ENCODE measurements at regions of chr6 and their contacts with region 1.

Region 1: DNA sequence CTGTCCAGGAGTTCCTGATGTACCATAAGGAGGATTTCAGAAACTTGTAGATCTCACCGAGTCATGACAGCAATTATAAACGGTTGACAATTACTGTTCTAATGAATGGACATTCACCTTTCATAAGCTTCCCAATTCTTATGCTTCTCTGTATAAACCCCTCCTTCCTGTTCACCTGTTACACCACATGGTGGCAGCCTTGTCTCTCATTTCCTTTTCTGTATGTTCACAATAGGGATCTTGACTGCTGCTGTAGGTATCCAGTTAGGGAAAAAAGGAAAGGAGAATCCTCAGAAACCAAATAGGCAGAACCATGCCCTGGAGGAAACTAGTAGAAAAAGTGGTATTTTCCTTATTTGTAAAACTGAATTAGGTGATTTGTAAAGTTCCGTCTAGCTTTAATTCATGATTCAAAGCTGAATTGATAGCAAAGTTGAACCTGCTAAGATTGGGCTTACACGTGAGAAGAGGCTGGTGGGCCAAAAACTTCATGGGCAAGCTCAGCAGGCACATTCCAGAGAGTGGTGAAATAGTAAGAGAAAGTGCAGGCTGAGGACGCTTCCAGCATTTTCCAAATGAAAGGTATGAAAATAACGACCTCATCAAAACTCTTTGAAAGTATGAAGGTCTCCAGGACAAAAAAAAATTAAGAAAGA is 29.0 kb upstream of the TBPL1 start:
- DNase-seq: peak; percentile 72 to 79 (median 74)
- H3K4me3 ChIP-seq: no peak overlapping the region
- H3K27ac ChIP-seq: no peak overlapping the region
- H3K4me1 ChIP-seq: no peaks in the 10 kb centered on the region
- H3K27me3 ChIP-seq: peaks cover 3 to 40% (median 8%) of the 10 kb centered on the region in 5 experiments

Region 2: GRCh38 chr6:133568970-133569889 is 354.8 kb before region 1 on chr6:
- CTCF ChIA-PET with region 1: interaction called, 29 read pairs
- POLR2A ChIA-PET with region 1: no interaction called
- DNase-seq: peak; percentile 19 to 62 (median 51)
- H3K4me3 ChIP-seq: peak overlapping the region in 2 of 7 experiments; percentile 16 to 52
- H3K27ac ChIP-seq: no peak overlapping the region
- H3K4me1 ChIP-seq: peaks cover 0 to 5% (median 1%) of the 10 kb centered on the region in 4 experiments
- H3K27me3 ChIP-seq: peaks cover 12 to 52% (median 17%) of the 10 kb centered on the region in 5 experiments

Region 3: GRCh38 chr6:133906050-133906449 is 18.0 kb before region 1 on chr6:
- CTCF ChIA-PET with region 1: interaction called, 43 read pairs
- POLR2A ChIA-PET with region 1: no interaction called
- DNase-seq: peak in 2 of 3 donors; percentile 34 to 36
- H3K4me3 ChIP-seq: no peak overlapping the region
- H3K27ac ChIP-seq: no peak overlapping the region
- H3K4me1 ChIP-seq: no peaks in the 10 kb centered on the region
- H3K27me3 ChIP-seq: peaks cover 13 to 71% (median 27%) of the 10 kb centered on the region in 5 experiments

Region 4: DNA sequence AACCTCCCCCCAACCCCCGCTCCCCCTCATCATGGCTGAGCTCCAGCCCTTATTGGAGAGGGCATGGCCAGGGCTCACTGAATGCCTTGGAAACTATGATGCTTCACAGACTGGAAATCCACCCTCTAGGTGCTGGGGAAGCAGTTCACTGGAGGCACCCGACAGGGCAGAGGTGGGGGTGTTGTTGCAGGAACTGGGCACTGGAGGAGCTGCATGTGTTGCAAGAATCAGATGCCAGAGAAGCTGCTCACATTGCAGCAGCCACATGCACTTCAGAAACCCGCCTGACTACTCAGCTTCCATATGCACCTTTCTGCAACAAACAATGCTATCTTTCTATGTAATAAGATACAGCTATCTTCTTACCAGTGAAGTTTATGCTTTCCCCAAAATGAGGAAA is 21.1 kb after region 1 on chr6:
- CTCF ChIA-PET with region 1: interaction called, 18 read pairs
- POLR2A ChIA-PET with region 1: no interaction called
- DNase-seq: no peak
- H3K4me3 ChIP-seq: no peak overlapping the region
- H3K27ac ChIP-seq: no peak overlapping the region
- H3K4me1 ChIP-seq: no peaks in the 10 kb centered on the region
- H3K27me3 ChIP-seq: peaks cover 0 to 2% (median 0%) of the 10 kb centered on the region in 5 experiments

Region 5: DNA sequence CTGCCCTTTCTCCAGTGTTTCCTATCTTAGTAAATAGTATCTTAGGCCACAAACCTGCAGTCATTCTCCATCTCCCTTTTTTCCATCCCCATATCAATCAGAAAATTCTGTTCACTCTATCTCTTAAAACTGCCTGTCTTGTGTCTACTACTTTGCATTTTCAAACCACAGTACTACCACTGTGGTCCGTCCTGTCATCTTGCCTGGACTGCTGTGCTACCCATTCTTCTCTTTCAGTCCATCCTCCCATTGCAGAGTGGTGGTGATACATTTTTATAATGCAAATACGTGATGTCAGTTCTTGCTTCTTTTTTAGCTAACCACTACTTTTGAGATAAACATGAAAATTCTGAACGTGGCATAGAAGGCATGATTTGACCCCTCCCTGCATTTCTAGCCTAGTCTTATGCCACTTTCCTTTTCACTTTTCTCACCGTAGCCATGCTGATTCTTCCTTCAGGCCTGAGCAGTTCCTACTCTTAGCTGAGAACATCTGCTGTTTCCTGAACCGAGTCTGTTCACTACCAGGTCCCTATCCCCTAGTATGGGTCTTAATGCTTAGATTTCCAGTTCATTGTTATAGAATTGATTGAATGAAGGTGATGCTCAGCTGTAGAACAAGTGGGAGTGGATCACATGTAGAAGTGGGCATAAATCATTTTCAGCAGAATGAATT is 42.7 kb after region 1 on chr6:
- CTCF ChIA-PET with region 1: interaction called, 12 read pairs
- POLR2A ChIA-PET with region 1: no interaction called
- DNase-seq: no peak
- H3K4me3 ChIP-seq: no peak overlapping the region
- H3K27ac ChIP-seq: no peak overlapping the region
- H3K4me1 ChIP-seq: no peaks in the 10 kb centered on the region
- H3K27me3 ChIP-seq: no peaks in the 10 kb centered on the region

Region 6: DNA sequence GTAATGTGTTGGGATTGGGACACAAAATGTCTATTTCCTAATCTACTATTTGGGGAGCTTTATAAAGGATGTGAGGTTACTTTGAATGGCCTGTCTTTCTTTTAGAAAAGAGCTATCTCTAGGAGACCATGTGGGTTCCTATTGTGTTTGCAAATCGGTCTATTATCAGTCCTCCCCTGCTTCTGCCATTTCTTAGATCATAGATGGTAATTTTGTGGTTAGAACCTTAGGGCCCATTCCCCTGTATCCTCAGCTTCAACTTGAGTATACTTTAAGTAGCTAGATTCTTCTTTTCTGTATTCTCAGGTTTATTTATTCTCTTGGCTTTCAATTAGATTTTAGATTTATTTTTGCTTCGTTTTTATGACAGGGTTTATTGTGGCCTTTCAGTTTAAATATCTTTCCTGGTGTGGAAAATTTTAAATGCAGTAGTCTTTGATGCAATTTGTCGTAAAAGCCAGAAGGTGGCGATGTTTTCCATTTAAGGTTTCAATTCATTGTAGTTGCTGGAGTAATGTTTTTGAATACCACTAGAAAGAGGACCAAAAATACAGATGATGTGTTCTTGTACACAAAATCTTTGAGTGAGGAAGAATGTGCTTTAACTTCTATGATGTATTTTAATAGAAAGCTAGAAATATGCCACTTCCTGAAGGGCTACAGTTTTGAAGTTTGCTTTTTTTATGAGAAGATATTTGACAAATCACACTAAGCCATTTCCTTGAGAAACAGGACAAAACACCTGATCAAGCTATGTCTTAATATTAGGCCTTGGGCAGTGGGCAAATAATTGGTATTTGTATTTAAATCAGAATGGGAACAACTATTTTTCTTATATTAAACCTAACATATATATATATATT is 49.3 kb after region 1 on chr6:
- CTCF ChIA-PET with region 1: interaction called, 33 read pairs
- POLR2A ChIA-PET with region 1: no interaction called
- DNase-seq: peak; percentile 54 to 75 (median 74)
- H3K4me3 ChIP-seq: no peak overlapping the region
- H3K27ac ChIP-seq: no peak overlapping the region
- H3K4me1 ChIP-seq: no peaks in the 10 kb centered on the region
- H3K27me3 ChIP-seq: no peaks in the 10 kb centered on the region

Region 7: GRCh38 chr6:134436281-134436815 is 512.3 kb after region 1 on chr6:
- CTCF ChIA-PET with region 1: no interaction called
- POLR2A ChIA-PET with region 1: no interaction called
- DNase-seq: peak in 2 of 3 donors; percentile 15 to 19
- H3K4me3 ChIP-seq: no peak overlapping the region
- H3K27ac ChIP-seq: no peak overlapping the region
- H3K4me1 ChIP-seq: no peaks in the 10 kb centered on the region
- H3K27me3 ChIP-seq: no peaks in the 10 kb centered on the region

Measured in common myeloid progenitor, CD34-positive (primary cell).